ENCODE measurements at regions of chr12 and their contacts with region 1.

Region 1: GRCh38 chr12:50043854-50044253 is 13.5 kb upstream of the ASIC1 start:
- DNase-seq: no peak
- ATAC-seq: no peak
- H3K4me3 ChIP-seq: no peak overlapping the region
- H3K27ac ChIP-seq: no peak overlapping the region
- H3K4me1 ChIP-seq: peaks cover 0 to 8% of the 10 kb centered on the region in 2 experiments; a peak in 2 of 4 replicates
- H3K27me3 ChIP-seq: no peaks in the 10 kb centered on the region
- CTCF ChIP-seq: no peak
- POLR2A ChIP-seq: no peak
- RAD21 ChIP-seq: no peak

Region 2: GRCh38 chr12:50025187-50026059 is 18.4 kb before region 1 on chr12 and contains the start of gene RACGAP1:
- CTCF ChIA-PET with region 1: interaction called, 13 read pairs
- POLR2A ChIA-PET with region 1: interaction called, 3 read pairs
- RAD21 ChIA-PET with region 1: no interaction called
- intact Hi-C with region 1: no loop called
- DNase-seq: peak; percentile 98
- ATAC-seq: peak; percentile 98
- H3K4me3 ChIP-seq: peak within 1 kb of the TSS; percentile 61 to 95
- H3K27ac ChIP-seq: peak within 1 kb of the TSS; percentile 71
- H3K4me1 ChIP-seq: peaks cover 11 to 20% of the 10 kb centered on the region in 2 experiments
- H3K27me3 ChIP-seq: no peaks in the 10 kb centered on the region
- CTCF ChIP-seq: no peak
- POLR2A ChIP-seq: peak; percentile 42
- RAD21 ChIP-seq: no peak
- total RNA-seq, gene RACGAP1: 147 TPM

Region 3: GRCh38 chr12:50074936-50075807 is 31.3 kb after region 1 on chr12:
- CTCF ChIA-PET with region 1: interaction called, 30 read pairs
- POLR2A ChIA-PET with region 1: no interaction called
- RAD21 ChIA-PET with region 1: interaction called in 1 of 2 experiments, 4 read pairs
- intact Hi-C with region 1: loop called (anchors 1 kb)
- DNase-seq: peak; percentile 42
- ATAC-seq: peak; percentile 95
- H3K4me3 ChIP-seq: no peak overlapping the region
- H3K27ac ChIP-seq: no peak overlapping the region
- H3K4me1 ChIP-seq: peaks cover 0 to 14% of the 10 kb centered on the region in 2 experiments; a peak in 1 of 4 replicates
- H3K27me3 ChIP-seq: no peaks in the 10 kb centered on the region
- CTCF ChIP-seq: peak; percentile 81 to 93 (median 91)
- POLR2A ChIP-seq: no peak
- RAD21 ChIP-seq: peak; percentile 97

Region 4: GRCh38 chr12:50167041-50167828 is 123.4 kb after region 1 on chr12 and contains the start of gene CERS5:
- CTCF ChIA-PET with region 1: no interaction called
- POLR2A ChIA-PET with region 1: no interaction called
- RAD21 ChIA-PET with region 1: no interaction called
- intact Hi-C with region 1: no loop called
- DNase-seq: peak; percentile 96
- ATAC-seq: peak; percentile 98
- H3K4me3 ChIP-seq: peak within 1 kb of the TSS; percentile 83 to 93
- H3K27ac ChIP-seq: peak within 1 kb of the TSS; percentile 77
- H3K4me1 ChIP-seq: peaks cover 11 to 29% of the 10 kb centered on the region in 2 experiments; a peak in 3 of 4 replicates
- H3K27me3 ChIP-seq: no peaks in the 10 kb centered on the region
- CTCF ChIP-seq: 0 out of 6 replicates have a peak, but pooled peaks of 1 of the 3 experiments have one; percentile 10
- POLR2A ChIP-seq: peak; percentile 58
- RAD21 ChIP-seq: no peak
- total RNA-seq, gene CERS5: 33.4 TPM

Region 5: DNA sequence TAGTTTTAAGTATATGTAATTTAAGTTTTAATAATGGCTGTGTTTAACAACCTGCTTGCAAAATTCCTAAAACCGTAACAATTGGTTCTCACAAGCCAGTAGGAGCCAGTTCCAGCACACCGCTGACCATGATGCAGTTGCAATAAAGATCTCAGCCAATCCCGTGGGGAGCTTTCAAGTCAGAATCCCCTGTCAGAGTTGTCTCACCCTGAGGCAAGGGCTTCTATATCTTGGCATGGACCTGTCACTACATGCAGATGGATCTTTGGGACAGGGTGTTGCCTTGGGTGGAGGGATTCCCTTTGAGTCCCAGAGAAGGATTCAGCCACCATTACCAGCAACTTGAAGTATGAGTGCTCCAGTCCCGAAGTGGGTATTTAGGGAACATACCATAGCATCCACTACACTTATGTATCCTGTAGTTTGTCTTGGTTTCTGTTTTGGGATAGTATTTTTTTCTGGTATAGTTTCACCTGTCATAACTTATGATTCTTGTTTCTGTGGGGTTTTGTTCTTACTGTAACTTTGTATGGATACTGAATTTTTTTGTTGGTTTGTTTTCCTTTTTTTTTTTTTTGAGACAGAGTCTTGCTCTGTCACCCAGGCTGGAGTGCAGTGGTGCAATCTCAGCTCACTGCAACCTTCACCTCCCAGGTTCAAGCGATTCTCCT is 269.5 kb after region 1 on chr12:
- CTCF ChIA-PET with region 1: no interaction called
- POLR2A ChIA-PET with region 1: no interaction called
- RAD21 ChIA-PET with region 1: no interaction called
- intact Hi-C with region 1: no loop called
- DNase-seq: no peak
- ATAC-seq: no peak
- H3K4me3 ChIP-seq: no peak overlapping the region
- H3K27ac ChIP-seq: no peak overlapping the region
- H3K4me1 ChIP-seq: peaks cover 17 to 38% of the 10 kb centered on the region in 2 experiments
- H3K27me3 ChIP-seq: no peaks in the 10 kb centered on the region
- CTCF ChIP-seq: no peak
- POLR2A ChIP-seq: no peak
- RAD21 ChIP-seq: no peak

Measured in HCT116 (cell line).